ENCODE measurements at regions of chr11 and their contacts with region 1.

Region 1: DNA sequence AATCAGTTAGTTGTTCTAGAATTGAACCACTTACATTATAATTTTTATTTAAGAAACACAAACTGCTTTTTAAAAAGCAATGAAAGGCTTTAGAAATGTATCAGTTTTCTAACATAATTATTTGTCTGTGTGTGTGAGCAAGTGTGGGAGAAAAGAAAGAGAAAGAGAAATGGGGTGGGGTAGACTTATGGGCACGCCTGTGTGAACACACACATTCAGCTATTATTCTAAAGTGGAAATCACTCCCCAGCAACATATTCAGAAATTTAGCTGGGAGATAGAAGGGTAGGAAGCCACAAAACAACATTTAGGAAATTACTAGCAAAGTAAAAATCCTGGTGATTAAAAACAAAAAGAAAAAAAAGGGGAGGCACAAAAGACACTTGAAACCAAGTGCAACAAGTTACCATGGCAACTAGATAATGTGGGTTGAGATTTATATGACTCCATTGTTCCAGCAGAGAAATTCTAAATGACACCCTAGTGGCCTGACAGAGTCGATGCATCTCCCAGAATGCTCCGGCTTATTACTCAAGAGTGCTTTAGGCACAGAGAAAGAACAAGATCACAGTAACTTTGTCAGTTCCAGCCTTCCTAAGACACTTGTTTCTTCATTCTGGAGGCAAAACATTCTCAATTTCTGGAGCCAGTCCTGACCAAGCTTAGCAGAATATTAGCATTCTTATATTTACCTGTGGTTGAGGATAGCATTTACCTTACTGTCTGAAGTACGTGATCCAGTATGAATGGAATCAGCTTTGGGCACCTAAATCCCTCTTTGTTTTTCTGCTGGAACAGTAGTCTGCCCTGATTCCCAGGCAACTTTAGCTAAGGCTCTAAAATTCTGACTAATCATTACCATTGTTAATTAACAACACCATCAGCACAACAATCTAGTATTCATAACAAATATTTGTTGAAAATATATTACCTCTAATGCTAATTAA is 444.4 kb downstream of the DLG2 start:
- DNase-seq: peak; percentile 61 to 70
- H3K4me3 ChIP-seq: no peak overlapping the region
- H3K4me3 Mint-ChIP-seq: no peak overlapping the region
- H3K27ac Mint-ChIP-seq: no peak overlapping the region
- H3K4me1 ChIP-seq: peaks cover 9% of the 10 kb centered on the region
- H3K4me1 Mint-ChIP-seq: peaks cover 16% of the 10 kb centered on the region
- H3K27me3 ChIP-seq: no peaks in the 10 kb centered on the region
- H3K27me3 Mint-ChIP-seq: no peaks in the 10 kb centered on the region
- CTCF ChIP-seq: peak; percentile 72 to 80

Region 2: GRCh38 chr11:85123752-85124231 is 58.9 kb before region 1 on chr11:
- CTCF ChIA-PET with region 1: no interaction called
- POLR2A ChIA-PET with region 1: no interaction called
- intact Hi-C with region 1: loop called (anchors 2 kb)
- DNase-seq: peak in 1 of 2 experiments; percentile 23
- H3K4me3 ChIP-seq: no peak overlapping the region
- H3K4me3 Mint-ChIP-seq: peak overlapping the region; percentile 5
- H3K27ac Mint-ChIP-seq: peak overlapping the region; percentile 4
- H3K4me1 ChIP-seq: peaks cover 17% of the 10 kb centered on the region
- H3K4me1 Mint-ChIP-seq: peaks cover 20% of the 10 kb centered on the region
- H3K27me3 ChIP-seq: no peaks in the 10 kb centered on the region
- H3K27me3 Mint-ChIP-seq: no peaks in the 10 kb centered on the region
- CTCF ChIP-seq: no peak

Region 3: DNA sequence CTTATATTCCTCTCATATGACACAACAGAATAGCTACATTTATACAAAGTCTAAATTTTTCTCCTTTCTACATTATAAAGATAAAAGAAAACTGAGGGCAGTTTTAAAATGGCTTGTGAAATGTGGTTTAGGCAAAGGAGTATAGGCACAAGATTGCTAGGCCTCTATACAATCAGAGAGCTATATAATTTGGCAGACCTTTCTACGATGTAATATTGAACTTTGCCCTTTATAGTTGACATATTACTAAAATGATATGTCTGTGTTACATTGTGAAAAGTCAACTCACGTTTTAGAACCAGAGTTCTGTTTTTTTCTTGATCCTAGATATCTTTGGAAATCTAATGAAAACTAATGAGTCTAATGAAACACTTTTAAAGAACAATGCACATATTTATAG is 14.3 kb after region 1 on chr11:
- CTCF ChIA-PET with region 1: no interaction called
- POLR2A ChIA-PET with region 1: no interaction called
- intact Hi-C with region 1: no loop called
- DNase-seq: no peak
- H3K4me3 ChIP-seq: no peak overlapping the region
- H3K4me3 Mint-ChIP-seq: no peak overlapping the region
- H3K27ac Mint-ChIP-seq: no peak overlapping the region
- H3K4me1 ChIP-seq: peaks cover 18% of the 10 kb centered on the region
- H3K4me1 Mint-ChIP-seq: no peaks in the 10 kb centered on the region
- H3K27me3 ChIP-seq: no peaks in the 10 kb centered on the region
- H3K27me3 Mint-ChIP-seq: no peaks in the 10 kb centered on the region
- CTCF ChIP-seq: no peak